Activated B cell treated with CpG ODN at 0.5 μM for 24 hours (primary cell): ENCODE measurements at regions of chr1 and their contacts with region 1.

Region 1: DNA sequence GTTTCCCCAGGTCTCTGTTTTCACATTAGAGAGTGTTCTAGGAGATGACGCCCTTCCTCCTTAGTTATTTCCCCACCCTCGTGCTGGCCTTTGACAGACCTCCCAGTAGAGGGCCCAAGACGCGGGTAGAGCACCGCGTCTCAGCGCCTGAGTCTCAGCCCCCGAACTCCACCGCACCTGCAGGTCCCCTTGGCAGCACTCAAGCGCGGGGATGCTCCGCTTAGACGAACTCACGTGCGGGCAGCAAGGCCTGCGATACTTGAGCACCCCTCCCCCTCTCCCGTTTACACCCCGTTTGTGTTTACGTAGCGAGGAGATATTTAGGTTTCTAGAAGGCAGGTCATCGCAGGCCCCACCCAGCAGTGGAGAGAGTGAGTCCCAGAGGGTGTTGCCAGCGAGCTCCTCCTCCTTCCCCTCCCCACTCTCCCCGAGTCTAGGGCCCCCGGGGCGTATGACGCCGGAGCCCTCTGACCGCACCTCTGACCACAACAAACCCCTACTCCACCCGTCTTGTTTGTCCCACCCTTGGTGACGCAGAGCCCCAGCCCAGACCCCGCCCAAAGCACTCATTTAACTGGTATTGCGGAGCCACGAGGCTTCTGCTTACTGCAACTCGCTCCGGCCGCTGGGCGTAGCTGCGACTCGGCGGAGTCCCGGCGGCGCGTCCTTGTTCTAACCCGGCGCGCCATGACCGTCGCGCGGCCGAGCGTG is at the start of gene CD55:
- DNase-seq: peak; percentile 94
- ATAC-seq: peak; percentile 87
- H3K4me3 Mint-ChIP-seq: peak within 1 kb of the TSS; percentile 94
- H3K27ac Mint-ChIP-seq: peak within 1 kb of the TSS; percentile 100
- H3K4me1 Mint-ChIP-seq: peaks cover 65% of the 10 kb centered on the region
- H3K27me3 Mint-ChIP-seq: no peaks in the 10 kb centered on the region
- CTCF ChIP-seq: no peak
- total RNA-seq, gene CD55: 90.9 and 91.1 TPM in 2 replicates

Region 2: DNA sequence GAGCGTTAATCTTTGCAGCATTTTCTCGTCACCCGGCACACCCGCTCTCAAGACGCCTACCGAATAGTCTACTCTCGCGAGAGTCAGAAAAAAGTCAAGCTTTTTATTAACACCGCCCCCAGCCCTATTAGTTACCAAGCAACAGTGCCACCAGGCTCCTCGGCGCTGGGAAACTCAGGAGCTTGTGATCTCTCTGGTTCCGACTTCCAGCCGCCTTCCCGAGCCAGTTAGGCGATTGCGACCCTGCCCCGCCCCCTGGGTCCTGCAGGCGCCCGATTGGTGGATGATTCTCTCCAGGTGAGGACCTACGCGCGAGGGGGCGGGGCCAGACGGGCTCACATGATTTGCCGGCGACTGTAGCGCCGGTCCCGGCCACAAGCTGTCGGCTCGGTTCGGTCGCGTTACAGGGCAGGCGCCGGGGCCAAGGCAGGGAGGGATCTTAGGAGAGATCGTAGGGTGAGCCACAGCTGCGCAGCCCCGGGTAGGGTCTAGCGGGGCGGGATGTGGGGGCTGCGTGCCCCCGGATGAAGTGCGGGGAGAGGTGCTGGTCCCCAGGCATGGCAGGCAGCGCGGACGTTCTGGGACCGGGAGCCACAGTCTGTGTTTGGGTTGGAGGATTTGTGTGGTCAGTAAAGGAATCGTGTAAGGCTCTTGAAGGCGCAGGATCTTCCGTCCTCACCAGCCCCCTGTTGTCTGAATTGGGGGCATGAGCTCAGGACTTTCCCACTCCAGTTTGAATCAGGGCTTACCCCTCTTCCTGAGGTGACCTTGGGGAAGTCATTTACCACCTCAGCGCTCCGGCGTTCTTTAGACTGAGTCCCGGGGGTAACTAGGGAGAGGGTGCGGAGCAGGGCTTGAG is 268.1 kb before region 1 on chr1 and contains the start of gene PFKFB2:
- CTCF ChIA-PET with region 1: no interaction called
- POLR2A ChIA-PET with region 1: interaction called, 18 read pairs
- intact Hi-C with region 1: loop called (anchors 1 kb)
- DNase-seq: peak; percentile 94
- ATAC-seq: peak; percentile 86
- H3K4me3 Mint-ChIP-seq: peak within 1 kb of the TSS; percentile 98
- H3K27ac Mint-ChIP-seq: peak within 1 kb of the TSS; percentile 98
- H3K4me1 Mint-ChIP-seq: peaks cover 56% of the 10 kb centered on the region
- H3K27me3 Mint-ChIP-seq: no peaks in the 10 kb centered on the region
- CTCF ChIP-seq: no peak
- total RNA-seq, gene PFKFB2: 7.6 and 10.1 TPM in 2 replicates

Region 3: DNA sequence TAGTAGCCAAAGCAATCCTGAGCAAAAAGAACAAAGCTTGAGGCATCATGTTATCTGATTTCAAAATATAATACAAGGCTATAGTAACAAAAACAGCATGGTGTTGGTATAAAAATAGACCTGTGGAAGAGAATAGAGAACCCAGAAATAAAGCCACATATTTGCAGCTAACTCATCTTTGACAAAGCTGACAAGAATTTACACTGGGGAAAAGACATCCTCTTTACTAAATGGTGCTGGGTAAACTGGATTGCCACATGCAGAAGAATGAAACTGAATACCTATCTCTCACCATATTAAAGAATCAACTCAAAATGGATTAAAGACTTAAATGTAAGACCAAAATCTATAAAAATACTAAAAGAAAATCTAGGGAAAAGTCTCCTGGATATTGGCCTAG is 59.3 kb before region 1 on chr1:
- CTCF ChIA-PET with region 1: no interaction called
- POLR2A ChIA-PET with region 1: interaction called, 3 read pairs
- intact Hi-C with region 1: loop called (anchors 5 kb)
- DNase-seq: no peak
- ATAC-seq: no peak
- H3K4me3 Mint-ChIP-seq: no peak overlapping the region
- H3K27ac Mint-ChIP-seq: no peak overlapping the region
- H3K4me1 Mint-ChIP-seq: peaks cover 18% of the 10 kb centered on the region
- H3K27me3 Mint-ChIP-seq: no peaks in the 10 kb centered on the region
- CTCF ChIP-seq: no peak

Region 4: GRCh38 chr1:207336559-207337467 is 15.6 kb after region 1 on chr1:
- CTCF ChIA-PET with region 1: interaction called, 32 read pairs
- POLR2A ChIA-PET with region 1: interaction called, 260 read pairs
- intact Hi-C with region 1: loop called (anchors 1 kb)
- DNase-seq: no peak
- ATAC-seq: peak; percentile 80
- H3K4me3 Mint-ChIP-seq: peak overlapping the region; percentile 73
- H3K27ac Mint-ChIP-seq: peak overlapping the region; percentile 98
- H3K4me1 Mint-ChIP-seq: peaks cover 82% of the 10 kb centered on the region
- H3K27me3 Mint-ChIP-seq: no peaks in the 10 kb centered on the region
- CTCF ChIP-seq: no peak

Region 5: GRCh38 chr1:207414606-207415108 is 93.4 kb after region 1 on chr1:
- CTCF ChIA-PET with region 1: no interaction called
- POLR2A ChIA-PET with region 1: interaction called, 41 read pairs
- intact Hi-C with region 1: loop called (anchors 2 kb)
- DNase-seq: no peak
- ATAC-seq: peak; percentile 76
- H3K4me3 Mint-ChIP-seq: peak overlapping the region; percentile 76
- H3K27ac Mint-ChIP-seq: peak overlapping the region; percentile 96
- H3K4me1 Mint-ChIP-seq: peaks cover 83% of the 10 kb centered on the region
- H3K27me3 Mint-ChIP-seq: no peaks in the 10 kb centered on the region
- CTCF ChIP-seq: no peak

Region 6: GRCh38 chr1:207828485-207829158 is 507.4 kb after region 1 on chr1:
- CTCF ChIA-PET with region 1: no interaction called
- POLR2A ChIA-PET with region 1: interaction called, 3 read pairs
- intact Hi-C with region 1: loop called (anchors 5 kb)
- DNase-seq: no peak
- ATAC-seq: no peak
- H3K4me3 Mint-ChIP-seq: peak overlapping the region; percentile 5
- H3K27ac Mint-ChIP-seq: peak overlapping the region; percentile 57
- H3K4me1 Mint-ChIP-seq: peaks cover 97% of the 10 kb centered on the region
- H3K27me3 Mint-ChIP-seq: peaks cover 2% of the 10 kb centered on the region
- CTCF ChIP-seq: no peak